ENCODE measurements at regions of chr19 and their contacts with region 1.

Region 1: GRCh38 chr19:14031719-14032480 is at the start of gene IL27RA:
- DNase-seq: peak; percentile 80
- ATAC-seq: peak; percentile 76
- H3K4me3 Mint-ChIP-seq: peak within 1 kb of the TSS; percentile 77
- H3K27ac Mint-ChIP-seq: 0 out of 2 replicates have a peak within 1 kb of the TSS, but pooled peaks have one; percentile 53
- H3K4me1 Mint-ChIP-seq: peaks cover 5% of the 10 kb centered on the region
- H3K27me3 Mint-ChIP-seq: peaks cover 15% of the 10 kb centered on the region
- CTCF ChIP-seq: peak; percentile 66; the same call in 1 of the 2 replicates
- total RNA-seq, gene IL27RA: 11.8 to 12.2 TPM (median 12.0 TPM) in 3 replicates

Region 2: GRCh38 chr19:13938301-13939064 is 93.4 kb before region 1 on chr19 and contains the start of gene PODNL1:
- CTCF ChIA-PET with region 1: interaction called, 10 read pairs
- POLR2A ChIA-PET with region 1: no interaction called
- DNase-seq: no peak
- ATAC-seq: no peak
- H3K4me3 Mint-ChIP-seq: peak within 1 kb of the TSS; percentile 29; the same call in 1 of the 2 replicates
- H3K27ac Mint-ChIP-seq: no peak within 1 kb of the TSS
- H3K4me1 Mint-ChIP-seq: peaks cover 29% of the 10 kb centered on the region
- H3K27me3 Mint-ChIP-seq: no peaks in the 10 kb centered on the region; the same call in 1 of the 2 replicates
- CTCF ChIP-seq: no peak
- total RNA-seq, gene PODNL1: 1.1 to 1.4 TPM (median 1.4 TPM) in 3 replicates

Region 3: DNA sequence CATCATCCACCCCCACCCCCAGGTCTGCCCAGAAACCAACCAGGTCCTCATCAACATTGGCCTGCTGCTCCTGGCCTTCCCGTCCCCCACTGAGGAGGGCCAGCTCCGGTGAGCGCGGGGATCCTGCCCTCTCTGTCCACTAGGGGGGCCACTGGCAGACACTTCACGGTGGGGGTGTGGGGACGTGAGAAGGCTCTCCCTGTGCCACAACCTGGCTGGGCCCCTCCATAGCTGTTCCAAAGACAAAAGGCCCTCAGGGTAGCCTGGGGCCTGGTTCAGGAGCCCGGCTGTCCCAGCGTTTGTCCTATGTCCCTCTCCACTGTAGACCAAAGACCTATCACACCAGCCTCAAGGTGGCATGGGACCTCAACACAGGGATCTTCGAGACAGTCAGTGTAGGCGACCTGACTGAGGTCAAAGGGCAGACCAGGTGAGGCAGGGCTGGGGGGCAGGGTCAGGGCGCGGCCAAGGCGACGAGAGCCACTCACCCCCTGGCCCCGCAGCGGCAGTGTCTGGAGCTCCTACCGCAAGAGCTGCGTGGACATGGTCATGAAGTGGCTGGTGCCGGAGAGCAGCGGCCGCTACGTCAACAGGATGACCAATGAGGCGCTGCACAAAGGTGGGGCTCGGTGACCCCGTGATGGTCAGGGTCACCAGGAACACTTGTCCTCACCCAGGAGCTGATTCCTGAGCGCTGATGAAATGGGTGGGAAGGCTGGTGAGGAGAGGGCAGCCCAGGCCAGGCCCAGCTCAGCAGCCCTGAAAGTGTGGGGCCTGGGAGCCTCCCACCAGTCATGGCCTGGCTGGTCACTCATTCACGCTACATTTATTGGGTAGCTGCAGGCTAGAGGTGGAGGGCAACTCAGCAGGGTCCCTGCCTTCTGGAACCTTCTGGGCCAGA is 71.7 kb before region 1 on chr19:
- CTCF ChIA-PET with region 1: interaction called, 16 read pairs
- POLR2A ChIA-PET with region 1: interaction called, 7 read pairs
- DNase-seq: peak; percentile 61
- ATAC-seq: peak; percentile 9
- H3K4me3 Mint-ChIP-seq: no peak overlapping the region
- H3K27ac Mint-ChIP-seq: peak overlapping the region; percentile 87
- H3K4me1 Mint-ChIP-seq: peaks cover 6% of the 10 kb centered on the region
- H3K27me3 Mint-ChIP-seq: peaks cover 3% of the 10 kb centered on the region
- CTCF ChIP-seq: peak; percentile 8; the same call in 1 of the 2 replicates

Region 4: GRCh38 chr19:13986348-13986904 is 45.5 kb before region 1 on chr19:
- CTCF ChIA-PET with region 1: interaction called, 14 read pairs
- POLR2A ChIA-PET with region 1: no interaction called
- DNase-seq: peak; percentile 83
- ATAC-seq: peak; percentile 69
- H3K4me3 Mint-ChIP-seq: peak overlapping the region; percentile 43
- H3K27ac Mint-ChIP-seq: peak overlapping the region; percentile 45; the same call in 1 of the 2 replicates
- H3K4me1 Mint-ChIP-seq: peaks cover 63% of the 10 kb centered on the region
- H3K27me3 Mint-ChIP-seq: no peaks in the 10 kb centered on the region
- CTCF ChIP-seq: no peak

Region 5: DNA sequence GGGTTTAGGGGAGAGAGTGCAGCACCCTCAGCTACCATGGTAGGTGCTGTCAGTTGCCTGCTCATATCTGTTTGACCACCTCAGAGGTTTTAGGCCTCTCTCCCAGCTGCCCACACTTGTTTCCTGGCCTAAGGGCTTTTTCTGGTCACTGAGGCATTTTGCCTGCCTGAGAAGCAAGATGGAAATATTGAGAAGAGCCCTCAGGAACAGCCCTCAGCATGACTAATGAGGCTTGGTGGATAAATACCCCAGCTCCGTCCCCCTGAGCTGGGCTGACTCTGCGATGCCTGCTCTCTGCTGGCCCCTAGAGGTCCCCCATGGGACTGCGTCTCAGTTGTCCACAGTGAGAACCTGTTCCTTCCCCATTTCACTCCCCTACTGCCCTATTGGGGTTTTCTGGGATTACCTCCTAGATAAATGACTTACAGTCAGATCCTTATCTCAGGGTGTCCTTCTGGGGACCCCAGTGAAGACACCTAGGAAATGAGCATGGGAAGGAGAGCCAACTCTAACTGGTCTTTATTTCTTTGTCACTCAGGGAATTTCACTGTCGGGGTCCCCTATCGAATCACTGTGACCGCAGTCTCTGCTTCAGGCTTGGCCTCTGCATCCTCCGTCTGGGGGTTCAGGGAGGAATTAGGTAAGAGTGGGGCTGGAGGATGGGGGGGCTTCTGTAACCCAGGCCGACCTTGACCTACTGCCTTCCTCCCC is 16.7 kb after region 1 on chr19:
- CTCF ChIA-PET with region 1: interaction called, 28 read pairs
- POLR2A ChIA-PET with region 1: interaction called, 4 read pairs
- DNase-seq: peak; percentile 92
- ATAC-seq: peak; percentile 98
- H3K4me3 Mint-ChIP-seq: no peak overlapping the region
- H3K27ac Mint-ChIP-seq: no peak overlapping the region
- H3K4me1 Mint-ChIP-seq: no peaks in the 10 kb centered on the region
- H3K27me3 Mint-ChIP-seq: no peaks in the 10 kb centered on the region
- CTCF ChIP-seq: peak; percentile 89

Region 6: DNA sequence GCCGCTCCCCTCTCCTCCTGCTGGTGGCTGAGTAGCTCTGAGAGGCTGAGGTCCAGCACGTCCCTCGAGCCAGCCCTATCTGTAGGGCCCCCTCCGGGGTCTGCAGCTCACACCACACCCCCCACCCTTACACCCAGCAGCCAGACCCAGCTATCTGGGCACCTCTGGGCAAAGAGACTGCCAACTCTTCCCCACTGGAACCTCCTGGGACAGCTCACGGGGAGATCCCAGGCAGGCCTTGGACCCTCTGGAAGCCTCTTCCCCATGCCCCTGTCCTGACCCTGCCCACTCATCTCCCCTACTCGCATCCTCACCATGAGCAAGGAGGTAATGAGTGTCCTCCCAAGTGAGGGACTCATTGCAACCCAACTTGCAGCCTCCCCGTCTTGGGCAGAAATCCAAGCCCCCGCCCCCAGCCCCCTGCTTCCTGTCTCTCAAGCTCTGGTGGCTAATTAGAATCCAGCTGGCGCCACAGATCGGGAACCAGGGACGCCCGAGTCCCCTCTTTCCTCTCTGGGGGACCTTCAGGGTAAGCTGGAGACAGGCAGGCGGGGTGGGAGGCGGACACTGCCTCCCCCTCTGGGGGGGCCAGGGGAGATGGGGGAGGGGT is 151.9 kb after region 1 on chr19:
- CTCF ChIA-PET with region 1: no interaction called
- POLR2A ChIA-PET with region 1: no interaction called
- DNase-seq: no peak
- ATAC-seq: peak; percentile 36; the same call in 1 of the 2 replicates
- H3K4me3 Mint-ChIP-seq: no peak overlapping the region
- H3K27ac Mint-ChIP-seq: no peak overlapping the region; the same call in 1 of the 2 replicates
- H3K4me1 Mint-ChIP-seq: peaks cover 5% of the 10 kb centered on the region
- H3K27me3 Mint-ChIP-seq: no peaks in the 10 kb centered on the region
- CTCF ChIP-seq: no peak